ENCODE measurements at regions of chr15 and their contacts with region 1.

Region 1: DNA sequence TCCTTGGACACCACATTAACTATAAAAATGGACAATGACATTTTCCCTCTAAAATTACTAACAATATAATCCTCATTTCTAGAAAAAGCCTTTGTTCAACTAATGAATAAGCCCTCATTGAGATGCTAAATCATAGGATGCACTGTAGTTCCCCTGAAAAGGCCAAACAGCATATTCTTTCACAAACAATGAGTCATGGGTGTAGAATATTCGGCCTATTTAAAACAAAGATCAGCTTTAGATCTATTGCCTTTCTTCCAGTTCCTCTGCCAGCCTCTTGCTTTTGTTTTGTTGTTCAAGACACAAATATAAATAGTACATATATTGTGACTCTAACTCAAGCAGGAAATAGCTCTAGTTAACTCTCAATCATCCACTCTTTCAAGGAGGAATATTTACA is 82.5 kb downstream of the ADAM10 start:
- DNase-seq: peak; percentile 28
- H3K4me3 ChIP-seq: no peak overlapping the region
- H3K27ac ChIP-seq: no peak overlapping the region
- H3K4me1 ChIP-seq: peaks cover 3% of the 10 kb centered on the region
- H3K27me3 ChIP-seq: no peaks in the 10 kb centered on the region
- CTCF ChIP-seq: no peak
- POLR2A ChIP-seq: no peak

Region 2: GRCh38 chr15:58616171-58616570 is 50.8 kb before region 1 on chr15:
- CTCF ChIA-PET with region 1: no interaction called
- POLR2A ChIA-PET with region 1: no interaction called
- dilution Hi-C with region 1: no loop called
- intact Hi-C with region 1: no loop called
- DNase-seq: no peak
- H3K4me3 ChIP-seq: no peak overlapping the region
- H3K27ac ChIP-seq: no peak overlapping the region
- H3K4me1 ChIP-seq: no peaks in the 10 kb centered on the region
- H3K27me3 ChIP-seq: no peaks in the 10 kb centered on the region
- CTCF ChIP-seq: no peak
- POLR2A ChIP-seq: no peak

Region 3: GRCh38 chr15:58677426-58677825 is 10.5 kb after region 1 on chr15:
- CTCF ChIA-PET with region 1: interaction called, 10 read pairs
- POLR2A ChIA-PET with region 1: no interaction called
- dilution Hi-C with region 1: no loop called
- intact Hi-C with region 1: no loop called
- DNase-seq: no peak
- H3K4me3 ChIP-seq: no peak overlapping the region
- H3K27ac ChIP-seq: no peak overlapping the region
- H3K4me1 ChIP-seq: peaks cover 11% of the 10 kb centered on the region
- H3K27me3 ChIP-seq: no peaks in the 10 kb centered on the region
- CTCF ChIP-seq: no peak
- POLR2A ChIP-seq: no peak

Measured in endothelial cell of umbilical vein (primary cell).